Transverse colon (tissue), 4 donors: ENCODE measurements at regions of chr3 and their contacts with region 1.

Region 1: DNA sequence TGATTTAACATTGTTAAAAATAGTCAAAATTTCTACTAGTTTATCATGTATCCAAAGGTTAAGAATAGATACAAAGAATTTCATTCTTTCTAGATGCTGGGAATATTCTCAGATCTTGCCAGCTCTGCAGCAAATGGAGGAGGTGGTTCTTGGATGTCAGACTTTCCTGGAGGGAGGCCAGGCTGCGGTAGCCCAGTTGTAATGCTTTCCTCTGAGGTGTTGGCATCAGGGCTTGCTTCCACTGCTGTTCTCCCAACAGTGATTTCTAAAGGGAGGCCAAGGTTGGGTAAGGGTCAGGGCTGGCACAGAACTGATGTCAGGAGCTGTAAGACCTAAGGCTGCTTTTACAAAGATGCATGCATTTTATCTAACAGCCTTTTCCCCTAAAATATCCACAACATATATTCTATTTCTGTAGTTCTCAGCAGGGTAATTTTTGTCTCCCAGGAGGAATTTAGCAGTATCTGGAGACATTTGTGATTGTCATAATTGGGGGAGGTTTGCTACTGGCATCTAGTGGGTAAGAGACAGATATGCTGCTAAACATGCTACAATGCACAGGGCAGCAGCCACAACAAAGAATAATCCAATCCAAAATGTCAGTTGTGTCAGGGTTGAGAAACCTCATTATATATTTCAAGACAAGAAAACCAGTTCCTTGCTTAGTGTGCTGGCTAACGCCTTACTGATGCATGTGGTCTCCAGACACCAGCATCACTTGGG is 42.0 kb upstream of the SPTSSB start:
- DNase-seq: no peak
- H3K4me3 ChIP-seq: no peak overlapping the region
- H3K27ac ChIP-seq: no peak overlapping the region
- H3K4me1 ChIP-seq: peaks cover 0 to 30% (median 3%) of the 10 kb centered on the region in 4 donors
- H3K27me3 ChIP-seq: no peaks in the 10 kb centered on the region
- CTCF ChIP-seq: no peak
- EP300 ChIP-seq: no peak
- POLR2A ChIP-seq: no peak

Region 2: GRCh38 chr3:161274719-161275298 is 138.5 kb before region 1 on chr3:
- in situ Hi-C with region 1: loop called in 2 of 4 experiments (anchors 5 to 10 kb)
- intact Hi-C with region 1: loop called (anchors 10 kb)
- DNase-seq: peak; percentile 18
- H3K4me3 ChIP-seq: no peak overlapping the region
- H3K27ac ChIP-seq: no peak overlapping the region
- H3K4me1 ChIP-seq: peaks cover 0 to 8% (median 0%) of the 10 kb centered on the region in 4 donors
- H3K27me3 ChIP-seq: no peaks in the 10 kb centered on the region
- CTCF ChIP-seq: peak in 4 of 5 experiments; percentile 23 to 45 (median 34)
- EP300 ChIP-seq: no peak
- POLR2A ChIP-seq: no peak